ENCODE measurements at regions of chr5 and their contacts with region 1.

Region 1: DNA sequence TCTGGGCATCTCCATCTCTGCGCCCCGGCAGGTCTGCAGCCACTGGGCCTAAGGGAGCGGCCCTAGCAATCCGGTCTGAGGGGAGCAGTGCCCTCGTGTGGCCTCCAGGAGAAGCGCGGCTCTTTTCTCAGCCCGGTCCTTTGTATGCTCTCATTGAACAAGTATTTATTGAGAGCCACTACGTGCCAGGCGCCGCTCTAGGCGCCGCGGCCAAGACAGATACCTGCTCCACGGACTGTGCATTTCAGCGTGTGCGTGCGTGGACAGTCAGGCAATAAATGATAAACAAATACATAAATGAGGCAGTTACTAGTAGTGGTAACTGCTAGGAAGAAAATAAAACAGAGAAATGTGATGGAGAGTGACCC is 2.3 kb upstream of the SLC4A9 start:
- DNase-seq: peak; percentile 91
- H3K4me3 Mint-ChIP-seq: peak overlapping the region; percentile 33
- H3K27ac Mint-ChIP-seq: no peak overlapping the region
- H3K4me1 Mint-ChIP-seq: peaks cover 8% of the 10 kb centered on the region
- H3K27me3 Mint-ChIP-seq: no peaks in the 10 kb centered on the region
- CTCF ChIP-seq: peak; percentile 97

Region 2: GRCh38 chr5:140054086-140054689 is 303.5 kb before region 1 on chr5:
- CTCF ChIA-PET with region 1: no interaction called
- POLR2A ChIA-PET with region 1: no interaction called
- intact Hi-C with region 1: no loop called
- DNase-seq: peak; percentile 77
- H3K4me3 Mint-ChIP-seq: no peak overlapping the region
- H3K27ac Mint-ChIP-seq: no peak overlapping the region
- H3K4me1 Mint-ChIP-seq: no peaks in the 10 kb centered on the region
- H3K27me3 Mint-ChIP-seq: no peaks in the 10 kb centered on the region
- CTCF ChIP-seq: no peak

Region 3: DNA sequence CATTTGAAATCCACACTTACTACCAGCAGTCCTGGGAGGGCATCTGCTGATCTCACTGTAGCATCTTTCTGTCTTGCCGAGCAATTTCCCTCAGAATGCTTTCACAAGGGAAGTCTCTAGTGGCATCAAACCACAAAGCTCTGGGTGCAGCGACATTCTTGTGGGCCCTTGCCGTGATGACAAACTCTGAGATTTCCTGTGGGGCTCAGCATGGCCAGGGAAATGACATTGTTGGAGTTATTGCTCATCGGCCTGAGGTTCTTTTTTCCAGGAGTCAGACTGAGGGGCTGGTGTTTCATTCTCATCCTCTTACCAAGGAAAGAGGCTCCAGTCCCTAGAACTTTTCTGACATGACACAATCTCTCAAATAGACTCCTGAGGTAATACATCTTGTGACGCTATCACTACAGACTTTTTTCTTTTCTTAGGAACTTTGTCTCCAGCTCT is 106.2 kb before region 1 on chr5:
- CTCF ChIA-PET with region 1: interaction called, 1,450 read pairs
- POLR2A ChIA-PET with region 1: interaction called, 136 read pairs
- intact Hi-C with region 1: no loop called
- DNase-seq: peak; percentile 70
- H3K4me3 Mint-ChIP-seq: no peak overlapping the region
- H3K27ac Mint-ChIP-seq: peak overlapping the region; percentile 80
- H3K4me1 Mint-ChIP-seq: peaks cover 27% of the 10 kb centered on the region
- H3K27me3 Mint-ChIP-seq: no peaks in the 10 kb centered on the region
- CTCF ChIP-seq: no peak

Region 4: GRCh38 chr5:140591747-140592372 is 234.2 kb after region 1 on chr5:
- CTCF ChIA-PET with region 1: no interaction called
- POLR2A ChIA-PET with region 1: no interaction called
- intact Hi-C with region 1: no loop called
- DNase-seq: peak; percentile 81
- H3K4me3 Mint-ChIP-seq: no peak overlapping the region
- H3K27ac Mint-ChIP-seq: no peak overlapping the region
- H3K4me1 Mint-ChIP-seq: peaks cover 21% of the 10 kb centered on the region
- H3K27me3 Mint-ChIP-seq: no peaks in the 10 kb centered on the region
- CTCF ChIP-seq: no peak